Heart left ventricle (tissue), 16 donors: ENCODE measurements at regions of chr13 and their contacts with region 1.

Region 1: GRCh38 chr13:66965181-66965580 is 265.0 kb downstream of the PCDH9 start:
- DNase-seq: no peak
- ATAC-seq: no peak
- H3K4me3 ChIP-seq: no peak overlapping the region
- H3K27ac ChIP-seq: no peak overlapping the region
- H3K4me1 ChIP-seq: no peaks in the 10 kb centered on the region
- H3K27me3 ChIP-seq: no peaks in the 10 kb centered on the region
- CTCF ChIP-seq: no peak
- POLR2A ChIP-seq: no peak

Region 2: DNA sequence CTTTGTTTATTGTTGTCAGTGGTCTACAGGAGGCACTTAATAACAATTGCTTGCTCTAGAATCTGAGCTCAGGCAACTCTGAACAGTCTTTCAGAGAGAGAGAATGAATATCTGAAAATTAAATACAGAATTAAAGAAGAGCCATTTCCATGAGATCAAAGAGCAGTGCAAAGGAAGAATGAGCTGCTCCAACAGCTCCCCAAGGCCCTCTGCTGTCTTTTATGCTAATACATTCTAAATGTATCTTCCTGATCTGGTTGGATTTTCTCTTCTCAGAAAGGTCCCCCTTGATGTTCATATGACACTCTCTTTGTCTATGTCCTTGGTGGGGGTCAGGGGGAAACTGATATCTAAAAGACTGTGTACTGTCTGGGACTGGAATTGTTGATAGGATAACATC is 764.6 kb before region 1 on chr13:
- intact Hi-C with region 1: loop called in 1 of 10 experiments (anchors 5 kb)
- DNase-seq: no peak
- ATAC-seq: no peak
- H3K4me3 ChIP-seq: no peak overlapping the region
- H3K27ac ChIP-seq: no peak overlapping the region
- H3K4me1 ChIP-seq: no peaks in the 10 kb centered on the region
- H3K27me3 ChIP-seq: no peaks in the 10 kb centered on the region
- CTCF ChIP-seq: no peak
- POLR2A ChIP-seq: no peak